ENCODE measurements at regions of chr11 and their contacts with region 1.

Region 1: DNA sequence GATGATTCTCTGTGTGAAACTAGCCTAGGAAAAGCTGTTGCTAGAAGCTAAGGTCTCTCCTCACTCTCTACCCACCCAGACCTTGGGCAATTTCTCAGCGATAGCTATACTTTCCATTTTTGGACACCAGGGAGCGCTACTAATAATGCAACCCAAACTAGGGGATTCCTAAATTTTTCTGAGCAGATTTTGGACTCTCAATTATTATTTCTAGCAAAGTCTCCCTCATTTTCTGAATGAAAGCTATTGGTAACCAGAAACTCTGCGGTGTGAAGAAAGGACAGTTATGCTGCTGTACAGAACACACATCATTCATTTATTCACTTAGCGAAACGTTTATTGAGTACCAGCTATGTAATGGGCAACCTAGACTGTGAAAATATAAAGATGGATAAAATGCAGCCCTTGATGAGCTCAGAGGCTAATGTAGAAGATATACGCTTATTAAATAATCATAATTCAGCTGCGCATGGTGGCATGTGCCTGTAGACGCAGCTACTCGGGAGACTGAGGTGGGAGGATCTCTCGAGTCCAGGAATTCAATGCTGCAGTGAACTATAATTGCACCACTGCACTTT is 6.1 kb upstream of the STIM1 start:
- DNase-seq: peak in 5 of 9 experiments; percentile 24 to 80 (median 60)
- ATAC-seq: peak; percentile 58
- H3K4me3 ChIP-seq: no peak overlapping the region
- H3K4me3 Mint-ChIP-seq: no peak overlapping the region
- H3K27ac ChIP-seq: no peak overlapping the region
- H3K27ac Mint-ChIP-seq: no peak overlapping the region
- H3K4me1 ChIP-seq: peaks cover 23% of the 10 kb centered on the region
- H3K4me1 Mint-ChIP-seq: peaks cover 35% of the 10 kb centered on the region
- H3K27me3 ChIP-seq: no peaks in the 10 kb centered on the region
- H3K27me3 Mint-ChIP-seq: no peaks in the 10 kb centered on the region
- CTCF ChIP-seq: peak; percentile 82

Region 2: GRCh38 chr11:3642071-3642951 is 207.1 kb before region 1 on chr11:
- CTCF ChIA-PET with region 1: no interaction called
- POLR2A ChIA-PET with region 1: no interaction called
- intact Hi-C with region 1: no loop called
- DNase-seq: peak; percentile 32 to 81 (median 59)
- ATAC-seq: peak; percentile 89
- H3K4me3 ChIP-seq: peak overlapping the region; percentile 31 to 57
- H3K4me3 Mint-ChIP-seq: peak overlapping the region; percentile 71
- H3K27ac ChIP-seq: no peak overlapping the region
- H3K27ac Mint-ChIP-seq: no peak overlapping the region
- H3K4me1 ChIP-seq: peaks cover 10% of the 10 kb centered on the region
- H3K4me1 Mint-ChIP-seq: peaks cover 8% of the 10 kb centered on the region
- H3K27me3 ChIP-seq: peaks cover 2 to 3% of the 10 kb centered on the region in 2 experiments
- H3K27me3 Mint-ChIP-seq: peaks cover 53% of the 10 kb centered on the region
- CTCF ChIP-seq: no peak

Region 3: GRCh38 chr11:3834664-3835461 is 14.5 kb before region 1 on chr11:
- CTCF ChIA-PET with region 1: interaction called, 265 read pairs
- POLR2A ChIA-PET with region 1: interaction called, 252 read pairs
- intact Hi-C with region 1: no loop called
- DNase-seq: peak in 2 of 9 experiments; percentile 29 to 34
- ATAC-seq: no peak
- H3K4me3 ChIP-seq: peak overlapping the region; percentile 7 to 26
- H3K4me3 Mint-ChIP-seq: peak overlapping the region; percentile 55
- H3K27ac ChIP-seq: peak overlapping the region in 1 of 2 experiments; percentile 61
- H3K27ac Mint-ChIP-seq: peak overlapping the region; percentile 92
- H3K4me1 ChIP-seq: peaks cover 89% of the 10 kb centered on the region
- H3K4me1 Mint-ChIP-seq: peaks cover 94% of the 10 kb centered on the region
- H3K27me3 ChIP-seq: no peaks in the 10 kb centered on the region
- H3K27me3 Mint-ChIP-seq: no peaks in the 10 kb centered on the region
- CTCF ChIP-seq: no peak

Region 4: GRCh38 chr11:3880724-3881123 is 31.3 kb after region 1 on chr11:
- CTCF ChIA-PET with region 1: interaction called, 33 read pairs
- POLR2A ChIA-PET with region 1: interaction called, 8 read pairs
- intact Hi-C with region 1: loop called (anchors 2 to 5 kb)
- DNase-seq: no peak
- ATAC-seq: no peak
- H3K4me3 ChIP-seq: no peak overlapping the region
- H3K4me3 Mint-ChIP-seq: no peak overlapping the region
- H3K27ac ChIP-seq: peak overlapping the region in 1 of 2 experiments; percentile 66
- H3K27ac Mint-ChIP-seq: peak overlapping the region; percentile 82
- H3K4me1 ChIP-seq: peaks cover 60% of the 10 kb centered on the region
- H3K4me1 Mint-ChIP-seq: peaks cover 80% of the 10 kb centered on the region
- H3K27me3 ChIP-seq: no peaks in the 10 kb centered on the region
- H3K27me3 Mint-ChIP-seq: no peaks in the 10 kb centered on the region
- CTCF ChIP-seq: no peak

Region 5: DNA sequence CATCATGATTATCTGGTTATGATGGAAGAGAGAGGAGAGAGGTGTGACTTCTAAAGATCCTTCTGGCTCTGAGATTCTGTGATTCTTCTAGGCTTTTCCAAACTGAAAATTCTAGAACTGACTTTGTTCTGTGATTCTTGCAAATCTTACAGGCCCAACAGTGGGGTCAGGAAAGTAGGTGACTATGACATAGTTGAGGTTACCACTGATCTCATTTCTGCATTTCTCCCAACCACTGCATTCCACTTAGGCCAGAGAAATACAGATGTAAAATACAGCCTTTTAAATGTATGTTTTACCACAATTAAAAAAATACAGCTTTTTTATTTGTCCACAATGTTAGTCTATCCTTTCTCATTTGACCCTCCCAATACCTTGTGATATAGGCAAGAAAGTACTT is 89.8 kb after region 1 on chr11:
- CTCF ChIA-PET with region 1: interaction called, 36 read pairs
- POLR2A ChIA-PET with region 1: interaction called, 24 read pairs
- intact Hi-C with region 1: no loop called
- DNase-seq: no peak
- ATAC-seq: peak; percentile 26
- H3K4me3 ChIP-seq: no peak overlapping the region
- H3K4me3 Mint-ChIP-seq: no peak overlapping the region
- H3K27ac ChIP-seq: no peak overlapping the region
- H3K27ac Mint-ChIP-seq: peak overlapping the region; percentile 78
- H3K4me1 ChIP-seq: peaks cover 61% of the 10 kb centered on the region
- H3K4me1 Mint-ChIP-seq: peaks cover 92% of the 10 kb centered on the region
- H3K27me3 ChIP-seq: no peaks in the 10 kb centered on the region
- H3K27me3 Mint-ChIP-seq: no peaks in the 10 kb centered on the region
- CTCF ChIP-seq: no peak

Region 6: GRCh38 chr11:3984896-3985295 is 135.5 kb after region 1 on chr11:
- CTCF ChIA-PET with region 1: interaction called, 22 read pairs
- POLR2A ChIA-PET with region 1: interaction called, 15 read pairs
- intact Hi-C with region 1: loop called (anchors 1 kb)
- DNase-seq: peak in 7 of 9 experiments; percentile 12 to 72 (median 54)
- ATAC-seq: peak; percentile 77
- H3K4me3 ChIP-seq: no peak overlapping the region
- H3K4me3 Mint-ChIP-seq: no peak overlapping the region
- H3K27ac ChIP-seq: no peak overlapping the region
- H3K27ac Mint-ChIP-seq: peak overlapping the region; percentile 92
- H3K4me1 ChIP-seq: peaks cover 78% of the 10 kb centered on the region
- H3K4me1 Mint-ChIP-seq: peaks cover 91% of the 10 kb centered on the region
- H3K27me3 ChIP-seq: no peaks in the 10 kb centered on the region
- H3K27me3 Mint-ChIP-seq: no peaks in the 10 kb centered on the region
- CTCF ChIP-seq: peak; percentile 21

Region 7: GRCh38 chr11:4087551-4087950 is 238.2 kb after region 1 on chr11:
- CTCF ChIA-PET with region 1: interaction called, 16 read pairs
- POLR2A ChIA-PET with region 1: interaction called, 4 read pairs
- intact Hi-C with region 1: no loop called
- DNase-seq: no peak
- ATAC-seq: no peak
- H3K4me3 ChIP-seq: no peak overlapping the region
- H3K4me3 Mint-ChIP-seq: no peak overlapping the region
- H3K27ac ChIP-seq: no peak overlapping the region
- H3K27ac Mint-ChIP-seq: peak overlapping the region; percentile 98
- H3K4me1 ChIP-seq: peaks cover 35% of the 10 kb centered on the region
- H3K4me1 Mint-ChIP-seq: peaks cover 40% of the 10 kb centered on the region
- H3K27me3 ChIP-seq: no peaks in the 10 kb centered on the region
- H3K27me3 Mint-ChIP-seq: no peaks in the 10 kb centered on the region
- CTCF ChIP-seq: no peak

Measured in CD8-positive, alpha-beta T cell (primary cell).